AG04449 (cell line): ENCODE measurements at regions of chr16 and their contacts with region 1.

Region 1: DNA sequence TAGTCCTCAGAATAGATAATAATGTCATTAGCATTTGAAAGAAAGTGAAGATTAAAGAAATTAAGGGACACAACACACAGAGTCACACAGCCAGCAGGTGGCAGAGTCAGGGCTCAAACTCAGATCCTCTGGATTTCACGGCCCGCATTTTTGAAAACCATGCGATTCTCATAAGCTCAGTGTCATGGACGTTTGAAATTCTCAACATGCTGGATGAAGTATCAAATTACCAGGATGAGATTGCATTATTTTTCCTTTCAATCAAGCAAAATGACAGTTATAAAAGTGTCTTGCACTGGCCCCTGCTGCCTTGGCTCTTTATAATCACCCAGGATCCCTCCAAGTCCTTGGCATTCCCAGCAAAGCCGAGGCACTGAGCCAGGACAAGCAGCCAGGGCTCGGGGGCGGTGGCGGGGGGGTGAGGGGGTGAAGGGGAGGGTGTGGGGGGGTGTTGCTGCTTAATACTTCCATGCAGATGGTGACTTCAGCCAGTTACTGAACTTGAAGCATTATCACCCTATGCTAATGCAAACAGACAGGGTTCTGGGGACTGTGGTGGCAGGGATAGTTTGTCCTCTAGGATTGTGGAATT is 6.6 kb upstream of the BMERB1 start:
- DNase-seq: no peak
- H3K4me3 ChIP-seq: peak overlapping the region; percentile 34
- CTCF ChIP-seq: peak; percentile 61

Region 2: DNA sequence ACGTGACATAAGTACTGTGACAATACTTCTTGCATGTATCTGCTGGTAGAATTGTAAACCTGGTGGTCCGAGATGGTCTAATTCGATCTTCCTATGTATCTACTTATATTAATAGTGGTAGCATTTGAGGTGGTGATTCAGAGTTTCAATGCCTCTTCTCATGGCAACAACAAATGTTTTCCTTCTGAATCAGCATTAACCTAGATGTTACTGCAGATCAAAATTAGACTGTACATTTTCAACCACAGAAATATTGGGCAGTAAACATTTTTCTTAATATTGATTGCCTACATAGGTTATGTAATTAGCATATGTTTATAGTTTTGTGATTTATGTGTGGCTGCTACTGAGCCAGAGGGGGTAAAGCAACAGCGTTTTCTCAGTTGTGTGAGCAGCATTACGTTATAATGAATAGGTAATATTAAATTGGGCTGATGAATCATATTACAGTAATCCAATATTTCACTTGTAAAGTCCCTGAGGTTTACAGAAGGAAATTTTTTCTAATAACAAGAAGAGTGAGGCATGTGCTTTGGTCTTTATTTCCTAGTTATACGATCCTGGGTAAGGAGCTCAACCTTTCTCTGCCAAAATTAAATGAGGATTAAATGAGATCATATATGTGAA is 12.2 kb before region 1 on chr16:
- CTCF ChIA-PET with region 1: interaction called, 23 read pairs
- POLR2A ChIA-PET with region 1: no interaction called
- DNase-seq: no peak
- H3K4me3 ChIP-seq: no peak overlapping the region
- CTCF ChIP-seq: no peak

Region 3: DNA sequence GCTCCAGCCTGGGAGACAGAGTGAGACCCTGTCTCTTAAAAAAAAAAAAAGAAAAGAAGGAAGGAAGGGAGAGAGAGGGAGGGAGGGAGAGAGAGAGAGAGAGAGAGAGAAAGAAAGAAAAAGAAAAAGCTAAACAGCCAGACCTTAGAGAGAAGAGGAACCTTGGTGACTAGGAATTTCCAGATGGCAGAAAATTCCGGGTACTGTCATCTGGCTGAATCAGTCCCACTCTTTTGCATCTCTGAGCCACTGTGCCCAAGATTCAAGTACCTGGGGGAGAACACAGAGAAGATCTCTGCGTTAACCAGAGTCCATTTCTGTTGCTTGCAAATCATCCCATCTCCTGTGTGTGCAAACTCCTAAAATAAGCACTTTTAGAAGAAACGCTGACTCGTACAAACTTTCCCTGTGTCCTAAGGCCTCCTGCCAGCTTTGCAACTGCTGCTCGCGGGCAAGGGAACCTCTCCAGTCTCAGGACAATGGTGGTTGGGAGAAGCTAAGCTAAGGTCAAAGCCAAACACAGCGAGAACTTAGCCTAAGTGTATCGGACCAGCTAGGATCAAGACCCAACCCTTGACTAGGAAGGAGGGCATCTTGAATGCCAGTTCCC is 24.6 kb after region 1 on chr16:
- CTCF ChIA-PET with region 1: interaction called, 10 read pairs
- POLR2A ChIA-PET with region 1: no interaction called
- DNase-seq: no peak
- H3K4me3 ChIP-seq: no peak overlapping the region
- CTCF ChIP-seq: no peak

Region 4: GRCh38 chr16:15464401-15465186 is 36.9 kb after region 1 on chr16:
- CTCF ChIA-PET with region 1: interaction called, 10 read pairs
- POLR2A ChIA-PET with region 1: no interaction called
- DNase-seq: no peak
- H3K4me3 ChIP-seq: no peak overlapping the region
- CTCF ChIP-seq: no peak

Region 5: DNA sequence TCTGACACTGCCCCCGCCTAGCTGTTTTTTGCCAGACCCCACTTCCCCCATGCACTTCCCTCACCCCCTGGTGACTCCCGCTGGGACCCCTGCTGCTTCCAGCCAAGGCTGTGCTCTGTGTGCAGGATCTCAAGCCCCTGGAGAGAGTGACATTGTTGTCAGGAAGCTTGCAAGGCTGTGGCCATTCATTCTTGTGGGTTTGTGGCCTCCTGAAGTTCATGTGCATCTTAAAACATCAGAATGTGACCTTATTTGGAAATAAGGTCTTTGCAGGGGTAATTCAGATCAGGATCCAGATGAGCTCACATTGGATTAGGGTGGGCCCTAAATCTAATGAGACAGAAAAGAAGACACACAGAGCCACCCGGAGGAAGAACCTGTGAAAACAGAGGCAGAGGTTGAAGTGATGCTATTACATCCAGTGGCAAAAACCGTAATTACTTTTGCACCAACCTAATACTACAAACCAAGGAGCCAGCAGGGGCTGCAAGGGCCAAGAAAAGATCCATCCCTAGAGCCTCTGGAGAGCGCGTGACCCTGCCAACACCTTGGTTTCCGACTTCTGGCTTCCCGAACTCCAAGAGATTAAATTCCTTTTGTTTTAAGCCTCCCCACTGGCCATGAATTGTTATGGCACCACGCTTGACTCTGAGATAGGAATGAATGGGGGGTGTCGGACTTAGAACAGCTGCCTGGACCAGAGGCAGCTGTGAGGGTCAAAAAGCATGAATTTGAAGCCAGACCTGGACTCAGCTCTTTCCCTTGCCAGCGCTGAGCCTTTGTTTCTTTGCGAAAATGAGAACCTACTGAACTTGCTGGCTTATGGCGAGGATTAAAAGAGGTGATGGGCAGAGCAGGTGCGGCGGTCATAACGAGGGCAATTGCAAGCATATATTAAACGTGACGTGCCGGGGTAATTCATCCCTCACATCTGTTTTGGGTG is 82.1 kb after region 1 on chr16:
- CTCF ChIA-PET with region 1: interaction called, 20 read pairs
- POLR2A ChIA-PET with region 1: no interaction called
- DNase-seq: no peak
- H3K4me3 ChIP-seq: no peak overlapping the region
- CTCF ChIP-seq: peak; percentile 5

Region 6: GRCh38 chr16:15548482-15548891 is 120.7 kb after region 1 on chr16:
- CTCF ChIA-PET with region 1: interaction called, 57 read pairs
- POLR2A ChIA-PET with region 1: no interaction called
- DNase-seq: no peak
- H3K4me3 ChIP-seq: no peak overlapping the region
- CTCF ChIP-seq: no peak